ENCODE measurements at regions of chr19 and their contacts with region 1.

Region 1: DNA sequence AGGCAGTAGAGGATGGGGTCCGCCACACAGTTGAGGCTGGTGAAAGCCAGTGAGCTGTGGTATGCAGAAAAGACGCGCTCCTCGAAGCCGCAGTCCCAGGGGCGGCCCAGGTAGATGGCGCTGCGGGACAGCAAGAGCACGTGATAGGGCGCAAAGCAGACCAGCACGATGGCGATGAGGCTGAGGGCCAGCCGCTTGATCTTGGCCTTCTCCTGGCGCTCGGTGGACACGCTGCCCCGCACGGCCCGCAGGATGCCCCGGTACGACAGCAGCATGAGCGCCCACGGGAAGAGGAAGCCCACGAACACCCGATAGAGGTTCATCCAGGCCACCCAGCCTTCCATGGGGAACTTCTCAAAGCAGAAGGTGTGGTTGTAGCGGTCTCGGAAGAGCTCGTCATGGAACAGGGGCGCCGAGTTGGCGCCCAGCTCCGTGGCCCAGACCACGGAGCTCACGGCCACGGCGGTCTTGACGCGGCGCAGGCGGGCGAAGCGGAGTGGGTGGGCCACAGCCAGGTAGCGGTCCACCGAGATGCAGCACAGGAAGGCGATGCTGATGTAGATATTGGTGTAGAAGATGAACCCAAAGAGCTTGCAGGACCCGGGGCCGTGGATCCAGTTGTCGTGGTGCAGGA is 6.5 kb upstream of the OPA3 start:
- DNase-seq: peak; percentile 55
- H3K4me3 Mint-ChIP-seq: no peak overlapping the region
- H3K27ac Mint-ChIP-seq: no peak overlapping the region
- H3K4me1 Mint-ChIP-seq: peaks cover 18% of the 10 kb centered on the region
- H3K27me3 Mint-ChIP-seq: peaks cover 34% of the 10 kb centered on the region

Region 2: GRCh38 chr19:45607071-45608029 is 16.2 kb after region 1 on chr19:
- CTCF ChIA-PET with region 1: interaction called, 11 read pairs
- POLR2A ChIA-PET with region 1: no interaction called
- DNase-seq: peak; percentile 47
- H3K4me3 Mint-ChIP-seq: no peak overlapping the region
- H3K27ac Mint-ChIP-seq: peak overlapping the region; percentile 69
- H3K4me1 Mint-ChIP-seq: peaks cover 18% of the 10 kb centered on the region
- H3K27me3 Mint-ChIP-seq: peaks cover 10% of the 10 kb centered on the region